Endothelial cell of umbilical vein (primary cell): ENCODE measurements at regions of chr1 and their contacts with region 1.

Region 1: GRCh38 chr1:79052829-79053449 is 46.4 kb upstream of the ADGRL4 start:
- DNase-seq: peak; percentile 13
- H3K4me3 ChIP-seq: peak overlapping the region; percentile 20 to 76 (median 27)
- H3K27ac ChIP-seq: no peak overlapping the region
- H3K4me1 ChIP-seq: no peaks in the 10 kb centered on the region
- H3K27me3 ChIP-seq: no peaks in the 10 kb centered on the region
- CTCF ChIP-seq: no peak
- POLR2A ChIP-seq: no peak

Region 2: GRCh38 chr1:79226963-79227362 is 174.0 kb after region 1 on chr1:
- CTCF ChIA-PET with region 1: no interaction called
- POLR2A ChIA-PET with region 1: no interaction called
- dilution Hi-C with region 1: no loop called
- intact Hi-C with region 1: loop called (anchors 1 kb)
- DNase-seq: no peak
- H3K4me3 ChIP-seq: no peak overlapping the region
- H3K27ac ChIP-seq: no peak overlapping the region
- H3K4me1 ChIP-seq: no peaks in the 10 kb centered on the region
- H3K27me3 ChIP-seq: no peaks in the 10 kb centered on the region
- CTCF ChIP-seq: no peak
- POLR2A ChIP-seq: no peak